AG04449 (cell line): ENCODE measurements at regions of chr6 and their contacts with region 1.

Region 1: GRCh38 chr6:30453508-30454116 is 35.7 kb upstream of the HLA-E start:
- DNase-seq: no peak
- H3K4me3 ChIP-seq: no peak overlapping the region
- CTCF ChIP-seq: peak; percentile 93

Region 2: DNA sequence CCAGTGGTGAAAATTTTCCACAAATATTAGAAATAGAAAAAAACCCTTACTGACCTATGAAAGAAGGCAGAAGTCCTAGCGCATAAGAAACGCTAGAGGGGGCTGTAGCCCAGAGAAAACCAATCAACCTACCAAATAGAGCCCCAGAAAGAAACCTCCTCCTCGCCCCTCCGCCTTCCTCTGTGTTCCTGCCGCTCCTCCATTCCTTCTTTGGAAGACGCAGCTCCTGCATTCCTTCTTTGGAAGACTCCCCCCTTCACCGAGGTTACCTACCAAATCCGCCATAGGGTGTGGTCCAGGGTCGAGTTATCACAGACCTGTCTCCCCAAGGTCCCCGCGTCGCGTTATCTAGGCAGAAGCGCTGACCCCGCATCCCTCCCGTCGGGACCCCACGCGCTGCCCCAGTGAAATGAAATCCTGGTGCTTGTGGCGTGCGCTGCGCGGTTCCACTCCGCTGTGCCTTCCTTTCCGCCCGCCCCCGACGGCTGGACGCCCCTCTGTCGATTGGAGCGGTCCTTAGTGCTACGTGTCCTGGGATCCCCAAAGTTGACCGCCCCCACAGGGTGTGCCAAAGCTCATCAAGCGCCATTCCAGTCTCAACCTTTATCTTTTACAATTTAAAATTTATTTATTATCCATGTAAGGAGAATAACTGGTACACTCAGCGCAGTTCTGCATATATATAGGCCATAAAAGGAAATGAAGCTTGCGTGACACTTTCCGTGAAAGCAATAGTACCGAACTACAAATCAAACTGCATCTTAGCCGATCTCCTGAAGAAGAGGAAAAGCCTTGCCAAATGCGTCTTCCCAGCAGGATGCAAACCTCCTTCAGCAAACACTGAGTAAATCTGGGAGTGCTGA is 95.7 kb before region 1 on chr6:
- CTCF ChIA-PET with region 1: interaction called, 12 read pairs
- POLR2A ChIA-PET with region 1: no interaction called
- DNase-seq: peak; percentile 17
- H3K4me3 ChIP-seq: peak overlapping the region; percentile 57
- CTCF ChIP-seq: peak; percentile 47

Region 3: DNA sequence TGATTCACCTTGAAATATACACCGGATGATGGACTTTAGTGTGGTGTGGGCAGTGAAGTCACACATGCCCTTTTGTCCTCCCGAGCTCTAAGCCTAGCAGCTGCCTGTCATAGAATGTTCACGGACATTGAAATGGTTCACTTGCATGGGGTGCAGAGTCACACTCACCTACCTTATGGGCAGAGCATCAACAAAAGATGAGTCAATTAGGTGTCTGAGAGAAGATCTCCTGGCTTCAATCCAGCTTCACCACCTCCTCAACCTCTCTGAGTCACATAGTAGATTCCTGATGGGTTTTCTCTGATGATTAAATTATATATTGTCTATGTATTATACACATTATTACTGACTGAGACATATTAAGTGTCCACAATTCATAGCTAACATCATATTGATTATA is 12.4 kb before region 1 on chr6:
- CTCF ChIA-PET with region 1: interaction called, 32 read pairs
- POLR2A ChIA-PET with region 1: no interaction called
- DNase-seq: no peak
- H3K4me3 ChIP-seq: no peak overlapping the region
- CTCF ChIP-seq: no peak

Region 4: GRCh38 chr6:30463651-30464618 is 10.3 kb after region 1 on chr6:
- CTCF ChIA-PET with region 1: interaction called, 102 read pairs
- POLR2A ChIA-PET with region 1: no interaction called
- DNase-seq: no peak
- H3K4me3 ChIP-seq: no peak overlapping the region
- CTCF ChIP-seq: no peak